Activated CD4-positive, alpha-beta T cell treated with anti-CD3 and anti-CD28 coated beads, Interleukin-2, amount 10 ng/mL, durations not matched to agents 24 days and 14 days (primary cell): ENCODE measurements at regions of chr1 and their contacts with region 1.

Region 1: GRCh38 chr1:116737020-116737854 is 17.0 kb upstream of the CD2 start:
- DNase-seq: peak; percentile 93
- H3K4me3 Mint-ChIP-seq: peak overlapping the region; percentile 76
- H3K27ac Mint-ChIP-seq: peak overlapping the region; percentile 100
- H3K4me1 Mint-ChIP-seq: peaks cover 67% of the 10 kb centered on the region
- H3K27me3 Mint-ChIP-seq: no peaks in the 10 kb centered on the region

Region 2: DNA sequence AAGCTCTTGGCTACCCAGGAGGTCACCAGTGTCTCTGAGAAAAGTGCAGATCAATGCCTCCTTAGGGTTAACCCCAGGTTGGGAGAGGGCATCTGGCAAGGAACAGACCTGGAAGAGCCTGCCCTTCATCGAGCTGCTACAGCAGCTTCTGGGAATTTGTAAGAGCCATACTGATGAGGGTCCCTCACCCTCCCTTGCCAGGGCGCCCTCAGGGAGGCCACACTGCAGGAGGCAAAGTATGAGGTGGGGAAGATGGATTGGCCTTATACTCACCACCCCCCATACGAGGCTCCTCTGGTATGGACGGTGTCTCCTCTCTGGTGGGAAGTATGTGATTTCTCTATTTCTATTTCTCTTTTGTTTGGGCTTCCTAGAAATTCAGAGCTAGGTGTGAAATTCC is 82.9 kb before region 1 on chr1:
- intact Hi-C with region 1: no loop called
- DNase-seq: no peak
- H3K4me3 Mint-ChIP-seq: no peak overlapping the region
- H3K27ac Mint-ChIP-seq: no peak overlapping the region
- H3K4me1 Mint-ChIP-seq: no peaks in the 10 kb centered on the region
- H3K27me3 Mint-ChIP-seq: peaks cover 23% of the 10 kb centered on the region

Region 3: GRCh38 chr1:116754198-116754977 is 17.2 kb after region 1 on chr1 and contains the start of gene CD2:
- intact Hi-C with region 1: loop called (anchors 1 kb)
- DNase-seq: peak; percentile 89
- H3K4me3 Mint-ChIP-seq: peak within 1 kb of the TSS; percentile 98
- H3K27ac Mint-ChIP-seq: peak within 1 kb of the TSS; percentile 97
- H3K4me1 Mint-ChIP-seq: peaks cover 27% of the 10 kb centered on the region
- H3K27me3 Mint-ChIP-seq: no peaks in the 10 kb centered on the region
- total RNA-seq, gene CD2: 500 and 501 TPM in 2 replicates

Region 4: DNA sequence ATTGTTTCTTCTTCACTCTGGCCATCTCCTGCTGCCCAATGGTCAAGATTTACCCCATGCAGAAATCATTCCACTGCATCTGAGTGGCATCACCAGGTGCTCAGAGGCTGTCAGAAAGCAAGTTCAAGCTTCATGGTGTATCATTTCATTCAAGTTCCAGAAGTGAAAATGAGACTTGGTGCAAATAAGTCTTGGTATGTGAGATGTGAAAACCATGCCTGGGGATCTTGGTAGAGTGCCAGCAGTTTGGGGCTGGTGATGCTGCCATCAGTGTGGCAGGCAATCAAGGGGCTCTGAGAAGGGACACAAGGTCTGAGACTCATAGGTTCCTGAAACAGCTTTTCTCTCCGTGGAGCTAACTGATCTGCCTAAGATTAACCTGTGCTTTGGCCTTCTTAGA is 69.0 kb after region 1 on chr1:
- intact Hi-C with region 1: loop called (anchors 1 kb)
- DNase-seq: peak; percentile 83
- H3K4me3 Mint-ChIP-seq: peak overlapping the region; percentile 79
- H3K27ac Mint-ChIP-seq: peak overlapping the region; percentile 95
- H3K4me1 Mint-ChIP-seq: peaks cover 84% of the 10 kb centered on the region
- H3K27me3 Mint-ChIP-seq: no peaks in the 10 kb centered on the region

Region 5: GRCh38 chr1:116847688-116848531 is 110.7 kb after region 1 on chr1:
- intact Hi-C with region 1: loop called (anchors 1 kb)
- DNase-seq: peak; percentile 71
- H3K4me3 Mint-ChIP-seq: peak overlapping the region; percentile 44
- H3K27ac Mint-ChIP-seq: peak overlapping the region; percentile 61
- H3K4me1 Mint-ChIP-seq: peaks cover 23% of the 10 kb centered on the region
- H3K27me3 Mint-ChIP-seq: no peaks in the 10 kb centered on the region

Region 6: GRCh38 chr1:116987256-116987555 is 250.0 kb after region 1 on chr1:
- intact Hi-C with region 1: loop called (anchors 2 kb)
- DNase-seq: peak; percentile 89
- H3K4me3 Mint-ChIP-seq: peak overlapping the region; percentile 89
- H3K27ac Mint-ChIP-seq: peak overlapping the region; percentile 98
- H3K4me1 Mint-ChIP-seq: peaks cover 35% of the 10 kb centered on the region
- H3K27me3 Mint-ChIP-seq: no peaks in the 10 kb centered on the region